CD8-positive, alpha-beta T cell (primary cell): ENCODE measurements at regions of chr16 and their contacts with region 1.

Region 1: GRCh38 chr16:57023541-57024249 is 34.3 kb downstream of the NLRC5 start:
- DNase-seq: peak; percentile 54 to 95 (median 84)
- ATAC-seq: peak; percentile 86
- H3K4me3 ChIP-seq: peak overlapping the region in 1 of 2 experiments; percentile 34
- H3K4me3 Mint-ChIP-seq: peak overlapping the region; percentile 67
- H3K27ac ChIP-seq: peak overlapping the region in 1 of 2 experiments; percentile 60
- H3K27ac Mint-ChIP-seq: peak overlapping the region; percentile 89
- H3K4me1 ChIP-seq: peaks cover 93% of the 10 kb centered on the region
- H3K4me1 Mint-ChIP-seq: peaks cover 93% of the 10 kb centered on the region
- H3K27me3 ChIP-seq: no peaks in the 10 kb centered on the region
- H3K27me3 Mint-ChIP-seq: no peaks in the 10 kb centered on the region
- CTCF ChIP-seq: no peak

Region 2: DNA sequence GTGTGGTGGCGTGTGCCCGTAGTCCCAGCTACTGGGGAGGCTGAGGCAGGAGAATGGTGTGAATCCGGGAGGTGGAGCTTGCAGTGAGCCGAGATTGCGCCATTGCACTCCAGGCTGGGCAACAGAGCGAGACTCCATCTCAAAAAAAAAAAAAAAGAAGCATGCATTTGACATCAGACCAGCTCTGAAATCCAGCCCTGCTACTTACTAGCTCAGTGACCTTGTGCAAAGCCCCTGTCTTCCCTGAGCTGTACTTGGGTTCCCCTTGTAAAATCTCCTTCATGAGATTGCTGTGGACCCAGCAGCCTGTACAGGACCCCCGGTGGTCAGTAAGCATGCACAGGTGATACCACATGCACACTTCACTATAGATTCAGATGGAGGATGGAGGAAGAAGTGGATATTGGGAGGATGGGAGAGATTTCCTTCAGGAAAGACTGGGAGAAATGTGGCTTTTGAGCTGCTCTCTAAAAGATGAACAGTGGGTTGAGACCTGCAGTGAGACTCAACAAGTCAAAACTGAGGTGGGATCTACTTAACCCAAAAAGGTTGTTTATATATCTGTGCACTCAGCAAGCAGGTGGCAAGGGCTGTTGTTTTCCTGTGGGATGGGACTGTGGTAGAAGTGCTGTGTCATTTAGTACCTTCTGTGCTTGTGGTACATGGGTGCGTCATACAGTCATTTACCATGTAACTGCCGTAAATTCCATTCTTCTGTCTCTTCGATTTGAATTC is 85.1 kb before region 1 on chr16:
- CTCF ChIA-PET with region 1: no interaction called
- POLR2A ChIA-PET with region 1: no interaction called
- intact Hi-C with region 1: no loop called
- DNase-seq: peak in 5 of 9 experiments; percentile 16 to 79 (median 63)
- ATAC-seq: peak; percentile 89
- H3K4me3 ChIP-seq: no peak overlapping the region
- H3K4me3 Mint-ChIP-seq: peak overlapping the region; percentile 56
- H3K27ac ChIP-seq: peak overlapping the region; percentile 9 to 45
- H3K27ac Mint-ChIP-seq: peak overlapping the region; percentile 89
- H3K4me1 ChIP-seq: peaks cover 35% of the 10 kb centered on the region
- H3K4me1 Mint-ChIP-seq: peaks cover 65% of the 10 kb centered on the region
- H3K27me3 ChIP-seq: no peaks in the 10 kb centered on the region
- H3K27me3 Mint-ChIP-seq: no peaks in the 10 kb centered on the region
- CTCF ChIP-seq: no peak

Region 3: GRCh38 chr16:56994311-56994710 is 29.4 kb before region 1 on chr16:
- CTCF ChIA-PET with region 1: interaction called, 4 read pairs
- POLR2A ChIA-PET with region 1: interaction called, 34 read pairs
- intact Hi-C with region 1: no loop called
- DNase-seq: peak in 3 of 9 experiments; percentile 21 to 58 (median 45)
- ATAC-seq: peak; percentile 16
- H3K4me3 ChIP-seq: peak overlapping the region; percentile 36 to 40
- H3K4me3 Mint-ChIP-seq: peak overlapping the region; percentile 100
- H3K27ac ChIP-seq: peak overlapping the region; percentile 38 to 90
- H3K27ac Mint-ChIP-seq: peak overlapping the region; percentile 99
- H3K4me1 ChIP-seq: peaks cover 73% of the 10 kb centered on the region
- H3K4me1 Mint-ChIP-seq: peaks cover 78% of the 10 kb centered on the region
- H3K27me3 ChIP-seq: no peaks in the 10 kb centered on the region
- H3K27me3 Mint-ChIP-seq: no peaks in the 10 kb centered on the region
- CTCF ChIP-seq: no peak

Region 4: GRCh38 chr16:57013229-57013628 is 10.5 kb before region 1 on chr16:
- CTCF ChIA-PET with region 1: interaction called, 4 read pairs
- POLR2A ChIA-PET with region 1: interaction called, 9 read pairs
- intact Hi-C with region 1: loop called in 1 of 2 experiments (anchors 1 kb)
- DNase-seq: no peak
- ATAC-seq: no peak
- H3K4me3 ChIP-seq: no peak overlapping the region
- H3K4me3 Mint-ChIP-seq: peak overlapping the region; percentile 54
- H3K27ac ChIP-seq: peak overlapping the region in 1 of 2 experiments; percentile 89
- H3K27ac Mint-ChIP-seq: peak overlapping the region; percentile 97
- H3K4me1 ChIP-seq: peaks cover 90% of the 10 kb centered on the region
- H3K4me1 Mint-ChIP-seq: peaks cover 83% of the 10 kb centered on the region
- H3K27me3 ChIP-seq: no peaks in the 10 kb centered on the region
- H3K27me3 Mint-ChIP-seq: no peaks in the 10 kb centered on the region
- CTCF ChIP-seq: no peak

Region 5: GRCh38 chr16:57039148-57039812 is 15.6 kb after region 1 on chr16:
- CTCF ChIA-PET with region 1: interaction called, 64 read pairs
- POLR2A ChIA-PET with region 1: interaction called, 86 read pairs
- intact Hi-C with region 1: loop called (anchors 1 kb)
- DNase-seq: peak in 7 of 9 experiments; percentile 24 to 71 (median 45)
- ATAC-seq: peak; percentile 10
- H3K4me3 ChIP-seq: peak overlapping the region in 1 of 2 experiments; percentile 54
- H3K4me3 Mint-ChIP-seq: peak overlapping the region; percentile 71
- H3K27ac ChIP-seq: peak overlapping the region; percentile 17 to 80
- H3K27ac Mint-ChIP-seq: peak overlapping the region; percentile 99
- H3K4me1 ChIP-seq: peaks cover 97% of the 10 kb centered on the region
- H3K4me1 Mint-ChIP-seq: peaks cover 89% of the 10 kb centered on the region
- H3K27me3 ChIP-seq: no peaks in the 10 kb centered on the region
- H3K27me3 Mint-ChIP-seq: no peaks in the 10 kb centered on the region
- CTCF ChIP-seq: no peak